MCF 10A (cell line): ENCODE measurements at regions of chrX and their contacts with region 1.

Region 1: DNA sequence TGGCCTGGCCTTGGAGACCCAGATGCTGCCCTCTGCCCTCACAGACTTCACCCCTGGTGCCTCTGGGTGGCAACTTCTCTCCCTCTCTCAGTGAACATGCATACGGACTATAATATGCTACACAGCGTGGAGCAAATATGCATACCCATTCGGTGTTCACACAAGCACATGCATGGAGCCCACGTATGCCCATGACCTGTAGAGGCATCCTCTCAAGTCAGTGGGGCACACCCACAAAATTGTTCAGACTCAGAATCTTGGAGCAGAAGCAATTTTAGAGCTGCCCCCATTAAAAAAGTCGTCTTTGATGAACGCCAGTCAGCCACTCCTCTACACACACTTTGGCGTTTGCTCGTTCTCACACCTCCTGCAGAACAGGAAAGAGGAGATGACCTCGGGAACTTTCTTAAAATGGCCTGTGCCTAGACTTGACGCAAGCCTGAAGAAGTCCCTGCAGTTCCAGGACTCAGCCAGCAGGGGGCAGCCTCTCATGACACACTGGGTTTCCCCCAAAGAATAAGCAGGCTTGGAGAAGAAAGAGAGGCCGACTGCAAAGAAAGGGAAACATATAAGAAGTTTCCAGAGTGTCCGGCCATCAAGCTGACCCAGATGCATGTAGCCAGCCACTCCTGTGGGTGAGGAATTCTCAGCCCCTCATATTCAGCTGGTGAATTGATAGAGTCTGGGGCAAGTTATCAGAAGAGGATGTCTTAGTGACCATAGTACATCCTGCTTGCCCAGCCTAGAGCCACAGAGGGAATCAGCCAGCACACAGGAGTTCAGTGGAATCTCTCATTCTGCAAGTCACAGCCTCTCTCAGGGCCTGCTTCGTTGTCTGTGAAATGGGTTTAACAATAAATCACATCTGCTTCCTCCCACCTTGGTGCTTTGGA is 17.3 kb downstream of the APLN start:
- DNase-seq: peak; percentile 76
- H3K4me3 Mint-ChIP-seq: no peak overlapping the region
- H3K27ac Mint-ChIP-seq: no peak overlapping the region
- H3K4me1 Mint-ChIP-seq: no peaks in the 10 kb centered on the region
- H3K27me3 Mint-ChIP-seq: peaks cover 30% of the 10 kb centered on the region
- CTCF ChIP-seq: peak; percentile 96

Region 2: DNA sequence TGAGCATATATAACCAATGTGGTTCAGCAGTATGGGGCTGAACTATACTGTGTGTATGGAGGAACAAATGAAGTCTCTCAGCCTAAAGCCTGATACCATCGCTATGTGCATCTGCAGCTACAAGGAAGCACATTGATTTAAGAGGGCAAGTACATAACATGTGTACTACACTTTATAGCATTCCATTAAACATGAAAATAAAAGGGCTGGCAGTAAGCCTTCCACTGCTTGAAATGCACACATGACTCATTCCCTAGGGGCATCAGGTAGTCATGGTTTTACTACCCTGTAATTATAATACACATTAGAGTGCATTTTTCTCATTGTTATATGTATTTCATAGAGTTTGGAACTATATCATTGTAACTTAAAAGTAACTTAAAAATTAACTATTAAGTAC is 165.3 kb before region 1 on chrX:
- CTCF ChIA-PET with region 1: no interaction called
- POLR2A ChIA-PET with region 1: no interaction called
- intact Hi-C with region 1: no loop called
- DNase-seq: peak; percentile 25
- H3K4me3 Mint-ChIP-seq: no peak overlapping the region
- H3K27ac Mint-ChIP-seq: no peak overlapping the region
- H3K4me1 Mint-ChIP-seq: no peaks in the 10 kb centered on the region
- H3K27me3 Mint-ChIP-seq: peaks cover 46% of the 10 kb centered on the region
- CTCF ChIP-seq: no peak

Region 3: GRCh38 chrX:129606918-129607317 is 30.5 kb before region 1 on chrX:
- CTCF ChIA-PET with region 1: interaction called, 12 read pairs
- POLR2A ChIA-PET with region 1: no interaction called
- intact Hi-C with region 1: loop called (anchors 1 kb)
- DNase-seq: peak; percentile 71
- H3K4me3 Mint-ChIP-seq: no peak overlapping the region
- H3K27ac Mint-ChIP-seq: no peak overlapping the region
- H3K4me1 Mint-ChIP-seq: no peaks in the 10 kb centered on the region
- H3K27me3 Mint-ChIP-seq: peaks cover 35% of the 10 kb centered on the region
- CTCF ChIP-seq: peak; percentile 74

Region 4: DNA sequence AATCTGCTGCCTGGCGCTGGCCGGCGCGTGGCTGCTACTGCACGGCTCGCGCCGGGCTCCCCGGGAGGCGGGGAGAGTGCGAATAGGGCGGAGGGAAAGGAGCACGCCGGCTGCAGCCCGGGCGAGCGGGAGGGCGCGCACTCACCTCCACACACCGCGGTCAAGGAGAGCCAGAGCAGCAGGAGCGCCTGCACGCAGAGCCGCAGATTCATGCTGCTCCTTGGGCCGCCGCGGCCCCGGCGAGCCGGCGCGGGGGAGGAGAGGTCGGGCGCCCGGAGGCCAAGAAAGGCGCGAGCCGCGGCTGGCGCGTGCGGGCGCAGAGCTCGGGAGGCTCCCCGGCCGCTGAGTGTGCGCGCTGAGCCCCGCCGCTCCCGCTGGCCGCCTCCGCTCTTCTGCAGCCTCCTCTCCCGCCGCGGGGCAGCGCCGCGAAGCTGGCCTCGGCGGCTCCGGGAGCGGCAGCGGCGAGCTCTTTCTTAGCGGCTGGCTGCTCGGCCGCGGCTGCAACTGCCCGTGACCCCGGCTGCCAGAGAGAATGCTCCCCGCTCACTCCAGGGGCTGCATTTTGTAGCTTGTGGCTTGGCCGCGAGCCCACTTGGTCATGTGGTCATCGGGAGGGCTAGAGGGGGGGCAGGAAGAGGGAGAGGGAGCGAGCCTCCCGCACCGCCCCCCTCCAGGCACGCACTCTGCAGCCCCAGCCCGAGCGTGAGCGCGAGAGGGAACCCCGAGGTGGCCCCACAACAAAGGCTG is 17.1 kb after region 1 on chrX and contains the start of gene APLN:
- CTCF ChIA-PET with region 1: interaction called, 24 read pairs
- POLR2A ChIA-PET with region 1: interaction called, 4 read pairs
- intact Hi-C with region 1: no loop called
- DNase-seq: no peak
- H3K4me3 Mint-ChIP-seq: peak within 1 kb of the TSS; percentile 71
- H3K27ac Mint-ChIP-seq: no peak within 1 kb of the TSS
- H3K4me1 Mint-ChIP-seq: no peaks in the 10 kb centered on the region
- H3K27me3 Mint-ChIP-seq: peaks cover 45% of the 10 kb centered on the region
- CTCF ChIP-seq: no peak
- total RNA-seq, gene APLN: not detected in 2 replicates

Region 5: DNA sequence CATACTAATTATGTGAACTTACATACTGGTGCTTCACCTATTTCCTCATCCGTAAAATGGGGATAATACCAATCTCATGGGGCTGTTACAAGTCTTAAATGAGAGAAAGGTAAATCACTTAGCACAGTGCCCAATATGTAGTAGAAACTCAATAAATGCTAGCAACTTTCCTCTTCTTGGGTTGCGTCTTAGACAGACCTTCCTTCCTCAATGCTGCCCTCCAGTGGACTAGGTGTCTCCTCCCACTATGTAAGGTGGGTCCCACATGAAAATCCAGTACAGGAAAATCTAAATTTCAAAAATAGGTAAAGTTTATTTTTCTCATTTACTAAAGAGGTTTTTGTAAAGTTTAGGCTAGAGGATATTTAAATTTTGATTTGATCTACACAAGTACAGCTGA is 185.7 kb after region 1 on chrX:
- CTCF ChIA-PET with region 1: no interaction called
- POLR2A ChIA-PET with region 1: no interaction called
- intact Hi-C with region 1: loop called (anchors 10 kb)
- DNase-seq: peak; percentile 63
- H3K4me3 Mint-ChIP-seq: no peak overlapping the region
- H3K27ac Mint-ChIP-seq: no peak overlapping the region
- H3K4me1 Mint-ChIP-seq: no peaks in the 10 kb centered on the region
- H3K27me3 Mint-ChIP-seq: no peaks in the 10 kb centered on the region
- CTCF ChIP-seq: peak; percentile 37